Activated T-helper 1 cell treated with anti-CD3 and anti-CD28 coated beads, Interleukin-12 subunit alpha, Interleukin-12 subunit beta, Interleukin-2, Interleukin-4 antibody, amounts not matched to agents 30 ng/mL and 10 ng/mL and 1 ng/mL, durations not matched to agents 14 hours and 24 hours and 36 hours (primary cell): ENCODE measurements at regions of chr5 and their contacts with region 1.

Region 1: GRCh38 chr5:138213161-138214029 is at the start of gene CDC23:
- DNase-seq: peak; percentile 89
- H3K4me3 Mint-ChIP-seq: peak within 1 kb of the TSS; percentile 96
- H3K27ac Mint-ChIP-seq: peak within 1 kb of the TSS; percentile 93
- H3K4me1 Mint-ChIP-seq: peaks cover 24% of the 10 kb centered on the region
- H3K27me3 Mint-ChIP-seq: no peaks in the 10 kb centered on the region
- total RNA-seq, gene CDC23: 48.0 and 50.4 TPM in 2 replicates

Region 2: DNA sequence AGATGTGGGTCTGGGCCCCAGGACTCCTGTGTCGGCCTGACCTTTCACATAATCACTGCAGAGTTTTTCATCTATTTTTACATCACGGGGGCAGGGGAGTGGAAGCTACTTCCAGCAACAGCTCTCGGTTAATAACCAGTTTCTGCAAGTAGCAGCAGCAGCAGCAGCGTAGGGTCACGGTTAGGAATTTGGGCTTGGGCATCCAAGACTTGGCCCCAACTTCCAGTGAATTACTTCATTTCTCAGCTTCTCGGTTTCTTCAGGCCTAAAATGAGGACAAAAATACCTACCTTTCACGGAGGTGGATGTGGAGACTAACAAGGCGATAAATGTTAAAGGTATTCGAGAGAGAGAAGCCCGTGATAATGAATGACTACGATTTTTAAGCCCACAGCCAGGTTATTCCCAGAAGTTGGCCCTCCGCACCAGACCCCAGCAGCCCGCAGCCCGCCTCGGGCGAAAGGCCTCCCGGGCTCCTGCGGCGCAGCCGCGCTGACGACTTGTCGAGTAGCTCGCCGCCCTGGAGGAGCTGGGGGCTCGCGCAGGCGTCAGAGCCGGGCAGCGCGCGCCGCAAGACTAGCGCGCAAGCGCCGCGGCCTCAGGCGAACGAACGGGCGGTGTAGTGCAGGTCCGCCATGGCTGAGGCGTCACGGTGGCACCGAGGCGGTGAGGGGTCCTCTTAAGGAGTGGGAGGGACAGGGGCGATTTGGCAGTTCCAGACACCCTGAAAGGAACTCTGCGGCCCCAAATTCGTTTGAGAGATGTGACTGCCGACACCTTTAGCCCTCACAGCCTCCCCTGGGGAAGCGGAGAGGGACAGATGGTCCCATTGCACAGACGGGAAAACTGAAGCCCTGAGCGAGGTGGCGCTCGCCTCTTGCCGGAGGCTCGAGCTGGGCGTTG is 324.3 kb before region 1 on chr5 and contains the start of gene PKD2L2:
- intact Hi-C with region 1: loop called (anchors 5 kb)
- DNase-seq: peak; percentile 82
- H3K4me3 Mint-ChIP-seq: peak within 1 kb of the TSS; percentile 84
- H3K27ac Mint-ChIP-seq: peak within 1 kb of the TSS; percentile 89
- H3K4me1 Mint-ChIP-seq: peaks cover 24% of the 10 kb centered on the region
- H3K27me3 Mint-ChIP-seq: peaks cover 2% of the 10 kb centered on the region
- total RNA-seq, gene PKD2L2: not detected in 2 replicates

Region 3: GRCh38 chr5:137995077-137995748 is 218.2 kb before region 1 on chr5:
- intact Hi-C with region 1: no loop called
- DNase-seq: no peak
- H3K4me3 Mint-ChIP-seq: no peak overlapping the region
- H3K27ac Mint-ChIP-seq: no peak overlapping the region
- H3K4me1 Mint-ChIP-seq: peaks cover 46% of the 10 kb centered on the region
- H3K27me3 Mint-ChIP-seq: no peaks in the 10 kb centered on the region

Region 4: GRCh38 chr5:138110266-138110963 is 103.0 kb before region 1 on chr5:
- intact Hi-C with region 1: no loop called
- DNase-seq: no peak
- H3K4me3 Mint-ChIP-seq: no peak overlapping the region
- H3K27ac Mint-ChIP-seq: no peak overlapping the region
- H3K4me1 Mint-ChIP-seq: no peaks in the 10 kb centered on the region
- H3K27me3 Mint-ChIP-seq: peaks cover 9% of the 10 kb centered on the region

Region 5: DNA sequence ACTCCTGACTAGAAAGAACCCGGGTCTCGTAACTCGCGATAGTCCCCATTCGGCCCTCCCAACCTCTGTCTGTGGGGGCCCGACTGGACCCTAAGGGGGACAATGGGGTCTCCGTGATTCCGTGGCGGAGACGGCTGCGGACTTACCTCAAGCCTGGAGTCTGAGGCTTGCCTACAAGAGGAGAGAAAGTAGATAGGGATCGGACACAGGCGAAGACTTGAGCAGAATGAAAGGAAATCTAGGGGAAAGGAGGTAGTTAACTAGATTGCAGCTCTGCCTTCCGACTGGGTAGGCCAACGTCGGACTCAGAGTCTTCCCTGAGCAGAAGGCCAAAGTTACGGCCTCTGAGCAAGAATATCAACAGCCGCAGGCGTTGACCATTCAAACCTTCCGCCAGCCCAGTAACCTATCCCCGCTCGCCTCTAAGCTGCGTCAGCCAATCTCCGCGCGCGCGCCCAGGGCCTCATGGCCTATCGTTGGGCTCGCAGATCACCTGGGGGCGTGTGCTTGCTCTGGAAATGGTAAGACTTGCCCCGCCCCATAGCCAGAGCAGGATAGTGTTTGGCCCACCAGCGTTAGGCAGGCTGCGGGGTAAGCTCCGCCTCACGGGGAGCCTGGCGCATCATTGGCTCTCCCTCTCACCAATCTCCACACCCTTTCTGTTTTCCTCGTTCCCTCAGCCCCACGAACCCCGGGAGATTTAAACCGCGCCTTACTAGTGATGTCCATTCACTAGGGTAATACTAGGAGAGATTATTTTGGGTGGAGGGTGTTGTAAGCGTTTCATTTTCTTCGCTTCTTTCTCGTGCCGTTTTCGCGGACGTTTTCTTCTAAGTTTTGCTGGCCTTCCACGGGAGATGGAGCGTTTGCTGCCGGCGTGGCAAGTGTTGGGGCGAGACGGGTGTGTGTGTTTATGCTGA is 118.3 kb after region 1 on chr5 and contains the start of gene CDC25C:
- intact Hi-C with region 1: loop called (anchors 1 kb)
- DNase-seq: peak; percentile 97
- H3K4me3 Mint-ChIP-seq: peak within 1 kb of the TSS; percentile 85
- H3K27ac Mint-ChIP-seq: peak within 1 kb of the TSS; percentile 82
- H3K4me1 Mint-ChIP-seq: peaks cover 24% of the 10 kb centered on the region
- H3K27me3 Mint-ChIP-seq: no peaks in the 10 kb centered on the region
- total RNA-seq, gene CDC25C: 5.3 and 5.6 TPM in 2 replicates

Region 6: DNA sequence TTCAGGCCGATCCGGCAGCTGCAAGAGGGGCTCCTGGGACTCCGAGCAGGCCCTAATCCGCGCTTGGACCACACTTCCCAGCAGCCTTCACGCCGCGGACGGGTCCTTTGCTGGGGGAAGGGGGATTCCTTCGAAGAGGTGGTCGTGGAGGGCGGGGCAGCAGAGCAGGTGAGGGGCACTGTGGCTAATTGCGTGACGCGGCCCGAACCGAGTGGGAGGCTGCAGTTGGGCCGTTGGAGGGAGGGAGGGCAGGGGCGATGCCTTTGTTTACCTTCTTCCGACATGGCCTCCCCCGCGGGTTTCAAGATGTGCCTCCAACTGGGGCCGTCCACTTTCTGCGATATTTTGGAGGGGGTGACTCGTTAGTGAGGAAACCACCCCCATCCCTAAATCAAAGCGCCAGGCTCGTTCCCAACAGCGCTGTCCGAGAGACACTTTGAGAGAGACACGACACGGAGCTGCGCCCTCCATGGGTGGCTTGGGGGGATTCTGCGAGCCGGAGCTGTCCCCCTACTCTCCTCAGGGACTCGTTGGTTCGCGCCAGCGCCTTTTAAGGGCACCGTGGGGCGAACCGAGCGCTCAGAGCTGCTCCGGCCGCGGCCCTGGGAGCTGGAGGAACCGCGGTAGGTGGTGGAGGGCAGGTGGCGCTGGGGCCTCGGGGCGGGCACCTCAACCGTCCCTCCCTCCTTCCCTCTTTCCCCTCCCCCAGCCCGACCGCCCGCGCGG is 124.5 kb after region 1 on chr5 and contains the start of gene FAM53C:
- intact Hi-C with region 1: loop called (anchors 1 kb)
- DNase-seq: peak; percentile 90
- H3K4me3 Mint-ChIP-seq: peak within 1 kb of the TSS; percentile 94
- H3K27ac Mint-ChIP-seq: peak within 1 kb of the TSS; percentile 99
- H3K4me1 Mint-ChIP-seq: peaks cover 44% of the 10 kb centered on the region
- H3K27me3 Mint-ChIP-seq: no peaks in the 10 kb centered on the region
- total RNA-seq, gene FAM53C: 27.0 and 29.2 TPM in 2 replicates

Region 7: DNA sequence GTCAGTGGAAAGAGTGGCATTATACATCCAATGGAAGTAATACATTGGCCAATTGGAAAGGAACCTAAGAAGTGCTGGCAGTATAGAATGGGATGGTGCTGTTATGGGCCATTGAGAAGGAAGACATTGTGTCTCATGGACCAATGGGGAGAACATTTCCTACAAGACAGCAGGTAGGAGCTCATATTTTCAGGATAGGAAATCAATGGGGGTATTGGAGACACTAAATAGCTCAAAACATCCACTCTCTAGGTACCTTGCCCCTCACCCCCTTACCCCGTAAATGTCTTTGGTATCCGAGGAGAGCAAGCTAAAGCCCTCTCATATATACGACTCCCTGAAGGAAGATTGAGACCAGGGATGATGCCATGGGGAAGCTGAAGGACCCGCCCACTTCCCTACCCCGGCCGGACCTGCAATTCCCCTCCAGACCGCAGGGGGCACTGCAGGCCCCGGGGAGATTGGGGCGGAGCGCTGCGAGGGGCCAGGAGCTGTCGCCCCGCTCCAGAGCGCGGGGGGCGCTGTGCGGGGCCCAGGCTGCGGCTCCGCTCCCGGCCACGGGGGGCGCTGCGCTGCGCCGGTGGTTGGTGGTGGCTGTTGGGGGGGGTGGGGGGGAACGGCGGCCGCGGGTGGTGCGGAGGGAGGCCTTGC is 138.8 kb after region 1 on chr5 and contains the start of gene KDM3B:
- intact Hi-C with region 1: loop called (anchors 1 kb)
- DNase-seq: peak; percentile 93
- H3K4me3 Mint-ChIP-seq: peak within 1 kb of the TSS; percentile 100
- H3K27ac Mint-ChIP-seq: peak within 1 kb of the TSS; percentile 97
- H3K4me1 Mint-ChIP-seq: peaks cover 51% of the 10 kb centered on the region
- H3K27me3 Mint-ChIP-seq: peaks cover 3% of the 10 kb centered on the region
- total RNA-seq, gene KDM3B: 55.0 and 59.3 TPM in 2 replicates

Region 8: DNA sequence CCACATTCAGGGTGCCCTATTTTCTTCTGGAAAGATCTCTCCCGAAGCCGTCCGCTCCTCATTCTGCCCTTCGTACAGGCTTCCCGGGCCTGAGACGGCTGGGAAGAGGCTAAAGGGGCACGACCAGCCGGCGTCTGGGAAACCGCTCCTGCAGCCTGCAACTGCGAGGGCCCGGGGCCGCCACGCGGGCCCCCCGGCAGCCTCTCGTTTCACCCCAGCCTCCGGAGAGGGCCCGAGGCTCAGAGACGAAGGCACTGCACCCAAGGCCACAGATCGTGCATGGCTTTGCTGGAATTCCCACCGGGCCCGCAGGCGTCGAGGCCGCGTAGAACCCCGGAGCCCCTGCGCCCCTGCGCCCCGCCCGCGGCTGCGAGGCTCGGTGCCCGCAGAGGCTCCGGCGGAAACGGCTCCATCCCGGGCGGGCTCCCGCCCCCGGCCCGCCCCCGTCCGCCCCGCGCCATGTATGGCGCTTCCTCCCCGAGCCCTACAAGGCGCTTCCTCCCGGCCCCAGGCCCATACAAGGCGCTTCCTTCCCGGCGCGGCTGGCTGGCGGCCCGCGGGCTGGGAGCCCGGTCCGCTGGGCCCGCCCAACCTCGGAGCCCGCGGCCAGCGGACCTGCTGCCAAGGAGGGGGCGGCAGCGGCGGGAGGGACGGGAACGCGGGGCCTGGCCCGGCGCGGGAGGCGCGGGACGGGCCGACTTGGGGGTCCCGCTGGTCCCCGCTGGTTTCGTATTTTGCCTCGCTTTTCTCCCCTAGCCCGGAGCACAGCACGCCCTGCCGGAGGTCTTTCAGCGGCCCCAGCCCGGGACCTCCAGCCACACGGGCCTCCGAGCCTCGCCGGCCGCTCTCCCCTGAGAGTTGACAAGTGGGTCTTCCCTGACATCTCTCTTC is 278.5 kb after region 1 on chr5:
- intact Hi-C with region 1: loop called (anchors 1 kb)
- DNase-seq: peak; percentile 83
- H3K4me3 Mint-ChIP-seq: peak overlapping the region; percentile 89
- H3K27ac Mint-ChIP-seq: peak overlapping the region; percentile 68
- H3K4me1 Mint-ChIP-seq: peaks cover 8% of the 10 kb centered on the region
- H3K27me3 Mint-ChIP-seq: peaks cover 34% of the 10 kb centered on the region